ENCODE measurements at regions of chr2 and their contacts with region 1.

Region 1: DNA sequence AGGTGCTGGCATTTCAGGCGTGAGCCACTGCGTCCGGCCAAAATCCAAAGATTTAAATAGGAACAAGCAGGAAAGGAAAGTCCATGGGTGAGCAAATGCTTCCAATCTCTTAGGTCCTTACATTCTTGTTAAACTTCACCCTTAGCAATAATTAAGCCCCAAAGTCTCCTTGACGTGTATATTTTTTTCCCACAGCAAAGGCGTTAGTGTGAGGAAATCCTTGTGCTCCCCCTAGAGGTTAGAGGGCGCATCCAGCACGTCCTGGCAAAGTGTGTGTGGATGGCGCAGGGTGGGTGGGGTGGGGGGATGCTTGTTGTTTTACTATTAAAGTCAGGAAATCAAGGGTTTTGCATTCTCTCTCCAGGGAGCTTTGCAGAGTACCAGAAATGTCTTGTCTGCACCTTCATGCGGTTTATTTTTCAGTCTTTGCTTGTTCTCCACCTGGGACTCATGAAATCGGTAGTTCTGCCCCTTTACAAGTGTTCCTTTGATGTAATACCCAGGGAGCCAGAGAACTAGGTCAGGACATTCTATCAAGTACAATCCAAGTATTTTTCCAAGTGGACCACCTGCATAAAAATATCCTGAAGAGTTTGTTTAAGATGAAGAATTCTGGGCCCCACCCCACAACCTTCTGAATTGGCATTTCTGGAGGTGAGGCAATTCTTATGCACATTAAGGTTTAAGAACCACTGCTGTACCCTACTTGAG is 22.2 kb upstream of the ITSN2 start:
- DNase-seq: peak; percentile 74
- H3K4me3 Mint-ChIP-seq: no peak overlapping the region
- H3K27ac Mint-ChIP-seq: no peak overlapping the region
- H3K4me1 Mint-ChIP-seq: no peaks in the 10 kb centered on the region
- H3K27me3 Mint-ChIP-seq: no peaks in the 10 kb centered on the region

Region 2: DNA sequence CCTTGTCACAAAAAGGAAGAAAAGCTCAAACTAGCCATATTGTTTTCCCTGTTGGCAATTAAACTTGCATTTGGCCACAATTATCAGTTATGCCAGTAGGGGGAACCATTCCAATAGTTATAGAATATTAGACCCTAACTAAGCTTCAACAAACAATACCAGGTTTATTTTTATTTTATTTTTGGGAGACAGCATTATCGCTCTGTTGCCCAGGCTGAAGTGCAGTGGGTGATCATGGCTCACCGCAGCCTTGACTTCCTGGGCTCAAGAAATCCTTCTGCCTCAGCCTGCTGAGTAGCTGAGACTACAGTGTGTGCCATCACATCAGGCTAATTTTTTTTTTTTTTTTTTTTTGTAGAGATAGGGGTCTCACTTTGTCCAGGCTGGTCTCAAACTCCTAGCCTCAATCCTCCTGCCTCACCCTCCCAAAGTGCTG is 557.7 kb before region 1 on chr2:
- CTCF ChIA-PET with region 1: no interaction called
- intact Hi-C with region 1: loop called (anchors 5 kb)
- DNase-seq: peak; percentile 41
- H3K4me3 Mint-ChIP-seq: no peak overlapping the region
- H3K27ac Mint-ChIP-seq: no peak overlapping the region
- H3K4me1 Mint-ChIP-seq: peaks cover 5% of the 10 kb centered on the region
- H3K27me3 Mint-ChIP-seq: no peaks in the 10 kb centered on the region

Region 3: GRCh38 chr2:23988371-23988770 is 394.1 kb before region 1 on chr2:
- CTCF ChIA-PET with region 1: no interaction called
- intact Hi-C with region 1: loop called (anchors 1 kb)
- DNase-seq: no peak
- H3K4me3 Mint-ChIP-seq: no peak overlapping the region
- H3K27ac Mint-ChIP-seq: no peak overlapping the region
- H3K4me1 Mint-ChIP-seq: no peaks in the 10 kb centered on the region
- H3K27me3 Mint-ChIP-seq: no peaks in the 10 kb centered on the region

Region 4: GRCh38 chr2:24228470-24228869 is 154.0 kb before region 1 on chr2:
- CTCF ChIA-PET with region 1: interaction called, 5 read pairs
- intact Hi-C with region 1: loop called (anchors 1 kb)
- DNase-seq: no peak
- H3K4me3 Mint-ChIP-seq: no peak overlapping the region
- H3K27ac Mint-ChIP-seq: no peak overlapping the region
- H3K4me1 Mint-ChIP-seq: no peaks in the 10 kb centered on the region
- H3K27me3 Mint-ChIP-seq: no peaks in the 10 kb centered on the region